Heart right ventricle (tissue), 16 donors: ENCODE measurements at regions of chr10 and their contacts with region 1.

Region 1: GRCh38 chr10:85849315-85849714 is 517.3 kb downstream of the GRID1 start:
- DNase-seq: no peak
- ATAC-seq: no peak
- H3K4me3 ChIP-seq: no peak overlapping the region
- H3K27ac ChIP-seq: no peak overlapping the region
- H3K4me1 ChIP-seq: no peaks in the 10 kb centered on the region
- H3K27me3 ChIP-seq: no peaks in the 10 kb centered on the region
- CTCF ChIP-seq: no peak

Region 2: DNA sequence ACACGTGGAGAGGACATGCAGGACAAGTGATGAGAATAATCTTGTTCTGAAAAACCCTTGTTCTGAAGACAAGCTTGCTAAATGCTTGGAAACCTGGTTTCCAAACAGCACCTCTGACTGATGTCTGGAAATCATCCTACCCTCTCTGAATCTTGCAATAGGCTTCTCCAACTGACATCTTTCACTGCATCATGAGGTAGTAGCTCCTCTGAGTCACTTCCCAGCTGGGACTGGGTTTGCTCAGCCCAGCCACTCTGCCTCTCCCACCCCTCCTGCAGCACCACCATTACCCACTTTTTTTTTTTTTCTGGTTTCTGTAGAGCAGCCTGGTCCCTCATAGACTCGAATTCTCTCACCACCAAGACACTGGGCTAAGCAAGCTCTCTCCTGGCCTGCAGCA is 402.5 kb before region 1 on chr10:
- intact Hi-C with region 1: loop called in 1 of 10 experiments (anchors 5 kb)
- DNase-seq: no peak
- ATAC-seq: no peak
- H3K4me3 ChIP-seq: no peak overlapping the region
- H3K27ac ChIP-seq: no peak overlapping the region
- H3K4me1 ChIP-seq: no peaks in the 10 kb centered on the region
- H3K27me3 ChIP-seq: no peaks in the 10 kb centered on the region
- CTCF ChIP-seq: no peak